GM13976 (cell line): ENCODE measurements at regions of chr1 and their contacts with region 1.

Region 1: GRCh38 chr1:212284744-212285684 is at the start of gene PPP2R5A:
- DNase-seq: peak; percentile 97
- CTCF ChIP-seq: peak; percentile 46

Region 2: DNA sequence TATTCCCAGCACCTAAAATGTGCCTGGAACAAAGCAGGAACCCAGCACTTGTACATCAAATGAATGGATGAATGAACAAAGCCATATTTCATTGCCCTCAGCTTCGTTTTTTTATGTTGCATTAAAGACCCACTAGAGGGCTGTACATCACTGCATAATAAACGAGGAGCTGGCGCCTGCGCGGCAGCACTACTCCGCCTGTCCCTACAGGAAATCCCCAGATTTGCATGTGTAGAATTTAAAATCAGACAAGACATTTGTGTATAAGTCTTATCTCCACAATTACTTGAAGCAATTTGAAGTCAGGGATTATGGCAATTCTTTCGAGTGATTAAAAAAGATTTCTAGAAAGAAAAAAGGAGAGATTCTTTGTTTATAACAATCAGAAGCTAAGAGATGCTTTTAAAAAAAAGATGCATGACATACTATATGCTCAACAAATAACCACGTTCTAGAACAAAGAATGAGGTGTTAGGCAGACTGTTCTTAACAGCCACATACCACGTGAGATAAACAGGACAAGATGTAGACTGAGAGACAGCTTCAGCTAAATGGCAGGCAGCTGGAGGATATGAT is 604.2 kb before region 1 on chr1:
- in situ Hi-C with region 1: loop called (anchors 25 kb)
- DNase-seq: peak; percentile 80
- CTCF ChIP-seq: peak; percentile 60